Right ventricle myocardium superior (tissue), 1 donor: ENCODE measurements at regions of chr11 and their contacts with region 1.

Region 1: GRCh38 chr11:9757809-9758636 is 94.1 kb downstream of the SWAP70 start:
- DNase-seq: peak; percentile 93
- ATAC-seq: peak; percentile 80

Region 2: GRCh38 chr11:9460322-9461067 is 297.5 kb before region 1 on chr11 and contains the start of gene ZNF143:
- intact Hi-C with region 1: no loop called
- DNase-seq: peak; percentile 100
- ATAC-seq: peak; percentile 97
- total RNA-seq, gene ZNF143: 25.3 TPM

Region 3: GRCh38 chr11:9617940-9618339 is 140.1 kb before region 1 on chr11:
- intact Hi-C with region 1: no loop called
- DNase-seq: no peak
- ATAC-seq: no peak

Region 4: GRCh38 chr11:9815486-9816136 is 57.6 kb after region 1 on chr11:
- intact Hi-C with region 1: loop called (anchors 10 kb)
- DNase-seq: no peak
- ATAC-seq: no peak

Region 5: GRCh38 chr11:9858822-9859221 is 100.8 kb after region 1 on chr11:
- intact Hi-C with region 1: no loop called
- DNase-seq: no peak
- ATAC-seq: no peak

Region 6: DNA sequence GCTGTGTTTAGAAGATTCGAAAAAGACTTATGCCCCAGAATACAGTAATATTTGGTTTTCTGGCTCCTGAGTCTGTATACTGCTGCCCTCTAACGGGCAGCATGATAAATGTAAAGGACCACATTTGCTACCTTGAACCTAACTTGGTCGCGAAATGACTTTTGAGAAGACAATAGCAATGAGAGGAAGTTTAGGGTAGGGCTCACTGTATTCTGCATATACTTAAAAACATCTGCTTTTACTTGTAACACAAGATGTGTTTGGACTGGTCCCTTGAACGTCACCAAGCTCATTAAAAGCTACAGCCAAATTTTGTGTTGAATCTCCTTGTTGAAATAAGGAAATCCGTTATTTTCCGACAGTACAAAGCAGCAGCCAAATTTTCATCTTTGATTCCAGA is 215.0 kb after region 1 on chr11:
- intact Hi-C with region 1: loop called (anchors 2 kb)
- DNase-seq: no peak
- ATAC-seq: peak; percentile 79

Region 7: DNA sequence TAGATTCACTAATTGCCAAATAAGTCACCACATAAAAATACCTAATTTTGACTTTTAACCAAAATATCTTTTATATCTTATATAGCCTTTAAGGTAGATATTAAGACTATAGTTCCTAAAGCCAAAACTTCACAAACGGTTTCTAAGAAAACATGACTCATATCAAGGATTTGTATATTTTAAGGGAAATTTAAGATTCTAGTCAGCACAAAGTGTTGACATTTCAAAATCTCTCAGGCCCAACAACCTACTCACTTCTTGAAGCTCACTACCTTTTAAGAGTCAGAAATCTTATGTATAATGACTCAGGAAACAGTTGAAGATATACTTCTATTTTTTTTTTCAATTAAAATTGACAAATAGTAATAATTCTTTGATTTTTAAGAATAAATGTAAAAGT is 314.1 kb after region 1 on chr11:
- intact Hi-C with region 1: no loop called
- DNase-seq: no peak
- ATAC-seq: no peak